ENCODE measurements at regions of chr3 and their contacts with region 1.

Region 1: GRCh38 chr3:12838179-12838965 is 3.0 kb downstream of the RPL32 start:
- DNase-seq: no peak
- H3K4me3 ChIP-seq: peak overlapping the region in 1 of 3 donors; percentile 9
- H3K27ac ChIP-seq: peak overlapping the region in 1 of 2 donors; percentile 6
- H3K4me1 ChIP-seq: peaks cover 0 to 13% of the 10 kb centered on the region in 2 donors
- H3K27me3 ChIP-seq: no peaks in the 10 kb centered on the region
- CTCF ChIP-seq: no peak
- POLR2A ChIP-seq: no peak

Region 2: DNA sequence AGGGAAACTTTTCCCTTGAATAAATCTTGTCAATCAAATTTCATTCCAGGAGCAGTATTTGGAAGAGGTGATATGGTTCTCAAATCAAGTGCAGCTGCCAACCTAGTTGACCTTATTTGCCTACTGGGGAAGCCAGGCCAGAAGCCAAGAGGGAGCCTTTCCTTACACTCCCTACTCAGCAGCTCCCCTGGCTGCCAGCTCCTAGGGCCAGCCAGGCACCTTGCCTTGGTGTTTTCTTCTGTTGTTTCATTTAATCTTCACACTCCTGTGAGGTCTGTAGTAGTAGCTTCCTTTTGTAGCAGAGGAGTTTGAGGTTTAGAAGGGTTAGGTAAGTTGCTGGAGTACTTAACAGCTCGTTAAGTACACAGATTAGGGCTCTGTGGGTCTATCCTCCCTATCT is 315.7 kb before region 1 on chr3:
- intact Hi-C with region 1: no loop called
- DNase-seq: no peak
- H3K4me3 ChIP-seq: no peak overlapping the region
- H3K27ac ChIP-seq: no peak overlapping the region
- H3K4me1 ChIP-seq: no peaks in the 10 kb centered on the region
- H3K27me3 ChIP-seq: no peaks in the 10 kb centered on the region
- CTCF ChIP-seq: no peak
- POLR2A ChIP-seq: no peak

Region 3: DNA sequence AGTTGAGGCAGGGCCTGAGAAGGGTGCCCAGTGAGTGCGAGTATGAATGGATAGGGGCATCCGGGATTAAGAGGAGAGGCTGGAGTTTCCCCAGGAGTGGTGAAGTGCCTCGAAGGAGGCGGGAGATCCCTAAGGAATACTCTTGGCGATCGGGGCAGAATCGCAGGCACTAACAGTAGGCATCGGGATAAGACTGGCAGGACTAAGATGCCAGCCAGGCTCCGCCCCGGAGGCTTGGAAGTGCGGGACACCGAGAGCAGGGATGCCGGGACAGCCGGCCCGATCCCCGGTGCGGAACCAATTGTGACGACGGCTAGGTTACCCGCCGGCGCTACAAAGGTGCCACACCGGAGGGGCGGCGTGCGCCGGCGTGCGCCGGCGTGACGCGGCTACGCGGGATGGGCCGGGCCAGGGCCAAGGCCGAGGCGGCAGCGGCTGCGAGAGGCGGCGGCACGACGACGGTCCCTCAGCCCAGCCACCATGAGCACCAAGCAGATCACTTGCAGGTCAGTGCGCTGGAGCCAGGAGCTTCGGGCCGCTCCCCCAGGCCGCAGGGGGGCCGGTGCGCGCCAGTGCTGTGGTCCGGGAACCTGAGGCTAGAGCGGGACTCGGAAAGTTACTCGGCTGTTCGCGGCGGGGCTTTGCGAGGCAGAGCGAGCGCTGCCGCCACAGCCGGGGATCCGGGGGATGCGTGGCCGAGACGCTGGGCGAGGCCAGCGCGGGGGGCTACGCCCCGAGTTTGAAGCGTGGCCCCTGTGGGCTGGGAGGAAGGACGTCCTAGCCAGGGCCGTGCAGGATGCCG is 281.5 kb before region 1 on chr3 and contains the start of gene MKRN2:
- intact Hi-C with region 1: loop called (anchors 5 kb)
- DNase-seq: peak; percentile 82 to 88
- H3K4me3 ChIP-seq: peak within 1 kb of the TSS; percentile 77 to 84 (median 77)
- H3K27ac ChIP-seq: peak within 1 kb of the TSS; percentile 91 to 93
- H3K4me1 ChIP-seq: peaks cover 0 to 7% of the 10 kb centered on the region in 2 donors
- H3K27me3 ChIP-seq: peaks cover 0 to 16% of the 10 kb centered on the region in 2 donors
- CTCF ChIP-seq: no peak
- POLR2A ChIP-seq: peak; percentile 68
- total RNA-seq, gene MKRN2: 34.7 to 37.3 (median 36.1) TPM

Region 4: GRCh38 chr3:12810013-12810780 is 28.2 kb before region 1 on chr3:
- intact Hi-C with region 1: no loop called
- DNase-seq: peak; percentile 91 to 92
- H3K4me3 ChIP-seq: peak overlapping the region; percentile 56 to 79 (median 65)
- H3K27ac ChIP-seq: peak overlapping the region; percentile 79 to 83
- H3K4me1 ChIP-seq: no peaks in the 10 kb centered on the region
- H3K27me3 ChIP-seq: no peaks in the 10 kb centered on the region
- CTCF ChIP-seq: peak; percentile 93 to 99 (median 96)
- POLR2A ChIP-seq: peak; percentile 13